Activated CD8-positive, alpha-beta T cell treated with anti-CD3 and anti-CD28 coated beads for 36 hours (primary cell): ENCODE measurements at regions of chr2 and their contacts with region 1.

Region 1: GRCh38 chr2:9813312-9814133 is 29.8 kb upstream of the TAF1B start:
- DNase-seq: peak; percentile 83
- ATAC-seq: peak; percentile 95
- H3K4me3 Mint-ChIP-seq: no peak overlapping the region
- H3K27ac Mint-ChIP-seq: peak overlapping the region; percentile 49
- H3K4me1 Mint-ChIP-seq: peaks cover 8% of the 10 kb centered on the region
- H3K27me3 Mint-ChIP-seq: peaks cover 4% of the 10 kb centered on the region
- CTCF ChIP-seq: peak; percentile 93

Region 2: GRCh38 chr2:9799665-9800632 is 13.6 kb before region 1 on chr2:
- CTCF ChIA-PET with region 1: interaction called, 63 read pairs
- POLR2A ChIA-PET with region 1: interaction called, 3 read pairs
- intact Hi-C with region 1: no loop called
- DNase-seq: peak; percentile 92
- ATAC-seq: peak; percentile 94
- H3K4me3 Mint-ChIP-seq: peak overlapping the region; percentile 12
- H3K27ac Mint-ChIP-seq: peak overlapping the region; percentile 61
- H3K4me1 Mint-ChIP-seq: peaks cover 18% of the 10 kb centered on the region
- H3K27me3 Mint-ChIP-seq: no peaks in the 10 kb centered on the region
- CTCF ChIP-seq: peak; percentile 89

Region 3: DNA sequence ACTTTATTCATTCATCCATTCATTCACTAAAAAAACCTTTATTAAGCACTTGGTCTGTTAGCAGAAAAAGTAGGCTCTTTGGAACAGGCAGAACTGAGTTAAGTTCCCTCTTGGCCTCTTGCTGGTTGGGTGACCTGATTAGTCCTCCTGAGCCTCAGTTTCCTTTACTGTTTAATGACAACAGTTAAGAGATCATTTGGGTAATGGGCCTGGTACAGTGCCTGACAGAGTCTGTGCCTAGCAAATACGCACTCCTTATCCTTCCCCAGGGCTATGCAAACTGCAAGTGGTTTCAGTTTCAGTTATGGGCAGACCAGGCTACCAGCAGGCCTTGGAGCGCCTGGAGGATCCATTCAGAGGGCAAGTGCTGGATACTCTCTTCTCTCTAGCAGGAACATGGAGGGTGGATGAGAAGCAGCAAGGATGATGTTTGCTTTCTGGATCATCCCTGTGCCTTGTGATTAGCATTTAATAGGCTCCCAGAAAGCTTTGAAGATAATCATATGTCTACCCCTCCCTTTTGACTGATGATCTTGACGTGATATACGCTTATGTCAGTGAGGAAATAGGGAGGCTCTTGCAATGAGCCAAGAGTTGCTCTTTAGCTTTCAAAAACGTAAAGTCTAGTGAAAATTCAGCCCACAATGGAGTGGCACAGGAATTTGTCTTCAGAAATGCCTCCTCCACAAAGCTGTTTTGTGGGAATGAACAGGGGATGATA is 17.3 kb after region 1 on chr2:
- CTCF ChIA-PET with region 1: interaction called, 28 read pairs
- POLR2A ChIA-PET with region 1: interaction called, 3 read pairs
- intact Hi-C with region 1: no loop called
- DNase-seq: no peak
- ATAC-seq: no peak
- H3K4me3 Mint-ChIP-seq: no peak overlapping the region
- H3K27ac Mint-ChIP-seq: no peak overlapping the region
- H3K4me1 Mint-ChIP-seq: no peaks in the 10 kb centered on the region
- H3K27me3 Mint-ChIP-seq: peaks cover 8% of the 10 kb centered on the region
- CTCF ChIP-seq: no peak

Region 4: GRCh38 chr2:9843229-9844035 is 29.9 kb after region 1 on chr2 and contains the start of gene TAF1B:
- CTCF ChIA-PET with region 1: interaction called, 46 read pairs
- POLR2A ChIA-PET with region 1: interaction called, 6 read pairs
- intact Hi-C with region 1: no loop called
- DNase-seq: peak; percentile 93
- ATAC-seq: peak; percentile 85
- H3K4me3 Mint-ChIP-seq: peak within 1 kb of the TSS; percentile 81
- H3K27ac Mint-ChIP-seq: peak within 1 kb of the TSS; percentile 85
- H3K4me1 Mint-ChIP-seq: peaks cover 37% of the 10 kb centered on the region
- H3K27me3 Mint-ChIP-seq: no peaks in the 10 kb centered on the region
- CTCF ChIP-seq: no peak
- total RNA-seq, gene TAF1B: 22.3 to 22.4 TPM

Region 5: GRCh38 chr2:9984217-9984739 is 170.8 kb after region 1 on chr2:
- CTCF ChIA-PET with region 1: interaction called, 13 read pairs
- POLR2A ChIA-PET with region 1: no interaction called
- intact Hi-C with region 1: no loop called
- DNase-seq: peak; percentile 30
- ATAC-seq: peak; percentile 93
- H3K4me3 Mint-ChIP-seq: no peak overlapping the region
- H3K27ac Mint-ChIP-seq: no peak overlapping the region
- H3K4me1 Mint-ChIP-seq: peaks cover 12% of the 10 kb centered on the region
- H3K27me3 Mint-ChIP-seq: peaks cover 12% of the 10 kb centered on the region
- CTCF ChIP-seq: peak; percentile 91

Region 6: DNA sequence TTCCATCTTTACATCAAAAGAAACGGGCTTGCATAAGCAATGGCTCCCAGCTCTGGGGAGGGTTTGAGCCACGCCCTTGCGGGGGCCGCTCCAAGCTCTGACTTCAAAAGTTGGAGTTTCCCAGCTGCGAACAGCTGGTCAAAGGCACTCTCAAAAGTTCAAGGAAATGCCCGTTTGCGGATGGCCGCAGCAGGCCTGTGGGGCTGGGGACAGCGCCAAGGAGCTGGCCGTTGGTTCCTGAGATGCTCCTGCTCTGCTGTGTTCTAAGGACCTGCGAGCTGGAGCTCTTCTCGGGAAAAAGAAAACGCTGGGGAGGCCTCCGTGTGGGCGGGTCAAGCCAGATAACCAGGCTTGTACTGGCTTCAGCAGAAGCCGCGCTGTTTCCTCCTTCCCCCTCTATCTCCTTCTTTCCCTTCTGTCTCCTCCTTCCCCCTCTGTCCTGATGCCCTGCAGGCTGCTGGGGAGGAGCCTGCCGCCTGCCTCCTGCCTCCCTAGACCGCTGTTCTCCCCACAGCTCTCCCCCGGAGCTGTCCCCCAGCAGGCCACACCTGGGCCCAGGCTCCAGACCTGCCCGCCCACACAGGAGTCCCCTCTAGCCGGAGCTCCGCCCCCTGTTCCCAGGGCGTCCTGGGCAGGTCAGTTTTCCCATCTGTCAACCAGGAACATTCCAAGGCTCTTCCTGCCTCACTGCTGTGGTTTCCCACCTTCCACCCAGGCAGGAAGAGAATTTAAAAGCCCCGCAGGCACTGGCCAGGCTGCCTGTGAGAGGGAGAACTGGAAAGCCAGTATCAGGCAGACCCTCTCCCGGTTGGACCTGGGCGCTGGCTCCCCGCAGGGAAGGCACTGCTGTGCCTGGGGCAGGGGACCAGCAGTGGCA is 243.9 kb after region 1 on chr2:
- CTCF ChIA-PET with region 1: interaction called, 11 read pairs
- POLR2A ChIA-PET with region 1: no interaction called
- intact Hi-C with region 1: no loop called
- DNase-seq: peak; percentile 65
- ATAC-seq: peak; percentile 67
- H3K4me3 Mint-ChIP-seq: no peak overlapping the region
- H3K27ac Mint-ChIP-seq: no peak overlapping the region
- H3K4me1 Mint-ChIP-seq: peaks cover 6% of the 10 kb centered on the region
- H3K27me3 Mint-ChIP-seq: peaks cover 2% of the 10 kb centered on the region
- CTCF ChIP-seq: no peak

Region 7: DNA sequence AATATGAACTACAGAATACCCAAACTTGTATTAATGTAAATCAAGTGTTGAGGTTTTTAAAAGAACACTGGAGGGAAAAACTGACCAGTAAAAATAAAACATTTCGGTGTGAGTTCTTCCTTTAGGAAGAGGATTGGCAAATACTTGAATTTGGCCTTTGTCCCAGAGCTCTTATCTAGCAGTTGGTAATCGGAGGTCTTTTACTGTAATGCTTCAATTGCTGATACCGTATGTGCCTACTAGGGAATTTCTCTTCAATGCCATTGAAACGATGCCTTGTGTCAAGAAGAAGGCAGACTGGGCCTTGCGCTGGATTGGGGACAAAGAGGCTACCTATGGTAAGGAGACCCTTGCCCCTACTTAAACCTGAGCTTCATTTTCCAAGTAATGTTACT is 313.1 kb after region 1 on chr2:
- CTCF ChIA-PET with region 1: no interaction called
- POLR2A ChIA-PET with region 1: no interaction called
- intact Hi-C with region 1: no loop called
- DNase-seq: no peak
- ATAC-seq: no peak
- H3K4me3 Mint-ChIP-seq: peak overlapping the region; percentile 24
- H3K27ac Mint-ChIP-seq: no peak overlapping the region
- H3K4me1 Mint-ChIP-seq: peaks cover 49% of the 10 kb centered on the region
- H3K27me3 Mint-ChIP-seq: peaks cover 2% of the 10 kb centered on the region
- CTCF ChIP-seq: no peak